HCT116 (cell line): ENCODE measurements at regions of chr11 and their contacts with region 1.

Region 1: DNA sequence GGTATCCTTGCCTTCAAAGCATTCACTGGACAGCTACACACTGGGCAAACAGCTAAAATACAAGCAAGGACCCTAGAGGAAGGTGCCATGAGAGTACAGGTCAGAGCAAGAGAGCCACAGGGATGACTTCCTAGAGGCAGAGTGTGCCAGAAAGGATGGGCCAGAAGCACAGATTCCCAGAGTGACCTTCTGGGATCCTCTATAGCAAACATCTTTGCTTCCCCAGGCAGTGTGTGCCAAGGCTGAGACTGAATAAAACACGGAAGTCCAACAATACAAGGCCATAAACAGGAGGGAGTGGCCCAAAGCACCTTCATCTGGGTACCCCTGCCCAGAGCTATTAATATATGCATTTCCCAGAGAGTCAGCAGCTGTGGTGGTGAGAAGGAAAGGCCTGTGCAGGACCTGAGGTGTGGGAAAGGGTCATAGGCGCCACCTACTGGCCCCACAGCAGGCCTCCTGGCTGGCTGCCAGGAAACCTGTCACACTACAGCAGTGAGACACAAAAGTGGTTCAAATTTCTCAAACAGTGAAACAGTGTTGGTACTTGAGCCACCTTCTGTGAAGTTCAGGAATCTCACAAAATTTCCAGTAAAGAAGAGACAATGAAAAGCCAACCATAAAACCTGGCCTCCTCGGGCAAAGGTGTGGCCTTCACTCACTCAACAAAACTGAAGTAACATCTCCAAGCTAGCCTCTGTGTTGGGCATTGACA is 20.3 kb downstream of the CLPB start:
- DNase-seq: peak; percentile 57
- ATAC-seq: peak; percentile 90
- H3K4me3 ChIP-seq: no peak overlapping the region
- H3K27ac ChIP-seq: no peak overlapping the region
- H3K4me1 ChIP-seq: peaks cover 0 to 9% of the 10 kb centered on the region in 2 experiments; a peak in 2 of 4 replicates
- H3K27me3 ChIP-seq: no peaks in the 10 kb centered on the region
- CTCF ChIP-seq: peak; percentile 86 to 93 (median 90)
- POLR2A ChIP-seq: no peak
- RAD21 ChIP-seq: peak; percentile 82

Region 2: GRCh38 chr11:72352859-72353551 is 61.1 kb before region 1 on chr11:
- CTCF ChIA-PET with region 1: interaction called, 9 read pairs
- POLR2A ChIA-PET with region 1: no interaction called
- RAD21 ChIA-PET with region 1: interaction called in 1 of 2 experiments, 3 read pairs
- intact Hi-C with region 1: loop called (anchors 1 kb)
- DNase-seq: no peak
- ATAC-seq: no peak
- H3K4me3 ChIP-seq: no peak overlapping the region
- H3K27ac ChIP-seq: no peak overlapping the region
- H3K4me1 ChIP-seq: peaks cover 0 to 9% of the 10 kb centered on the region in 2 experiments; a peak in 2 of 4 replicates
- H3K27me3 ChIP-seq: no peaks in the 10 kb centered on the region
- CTCF ChIP-seq: no peak; a peak in 1 of 6 replicates
- POLR2A ChIP-seq: no peak
- RAD21 ChIP-seq: no peak